Gastrocnemius medialis (tissue), 4 donors: ENCODE measurements at regions of chrX and their contacts with region 1.

Region 1: DNA sequence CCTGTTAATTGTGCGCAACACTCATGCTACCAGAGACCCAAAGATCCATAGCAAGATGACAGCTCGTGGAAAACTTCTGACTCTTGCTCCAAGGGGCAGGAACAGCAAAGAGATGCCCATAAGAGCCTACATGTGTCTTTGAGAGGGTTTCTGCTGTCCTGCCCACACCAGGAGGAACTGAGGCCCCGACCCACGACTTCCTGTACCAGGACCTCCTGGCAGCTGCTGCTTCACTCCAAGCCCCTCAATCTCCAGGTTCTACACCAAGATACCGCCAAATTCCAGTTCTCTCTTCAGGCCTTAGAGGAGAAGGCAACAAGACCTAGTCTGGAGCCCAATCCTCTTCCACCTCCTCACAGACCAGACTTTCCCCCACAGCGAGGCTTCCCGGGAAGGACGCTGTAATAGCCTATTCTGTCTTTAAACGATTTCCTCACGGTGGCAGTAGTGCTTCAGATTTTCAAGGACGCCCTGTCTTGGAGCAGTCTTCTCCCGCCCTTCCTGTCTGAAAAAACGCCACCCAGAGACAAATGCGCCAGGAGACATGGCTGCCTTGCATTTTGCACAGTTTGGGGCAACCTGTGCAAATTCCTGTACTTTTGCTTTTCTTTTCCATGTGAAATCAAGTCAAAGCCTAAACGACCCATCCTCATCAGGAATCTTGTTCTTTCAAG is 230.2 kb upstream of the STK26 start:
- DNase-seq: no peak
- ATAC-seq: no peak
- H3K4me3 ChIP-seq: peak overlapping the region in 3 of 4 donors; percentile 5 to 61 (median 55)
- H3K27ac ChIP-seq: peak overlapping the region in 2 of 4 donors; percentile 78 to 81
- H3K4me1 ChIP-seq: no peaks in the 10 kb centered on the region
- H3K27me3 ChIP-seq: no peaks in the 10 kb centered on the region
- CTCF ChIP-seq: peak in 3 of 5 experiments; percentile 43 to 71 (median 54)
- POLR2A ChIP-seq: no peak

Region 2: GRCh38 chrX:131741103-131741581 is 51.8 kb before region 1 on chrX:
- in situ Hi-C with region 1: no loop called
- intact Hi-C with region 1: loop called (anchors 1 kb)
- DNase-seq: no peak
- ATAC-seq: no peak
- H3K4me3 ChIP-seq: peak overlapping the region in 2 of 4 donors; percentile 58 to 62
- H3K27ac ChIP-seq: peak overlapping the region in 2 of 4 donors; percentile 73 to 81
- H3K4me1 ChIP-seq: no peaks in the 10 kb centered on the region
- H3K27me3 ChIP-seq: no peaks in the 10 kb centered on the region
- CTCF ChIP-seq: peak in 3 of 5 experiments; percentile 43 to 56 (median 46)
- POLR2A ChIP-seq: no peak

Region 3: GRCh38 chrX:131763674-131764073 is 29.3 kb before region 1 on chrX:
- in situ Hi-C with region 1: no loop called
- intact Hi-C with region 1: loop called (anchors 1 kb)
- DNase-seq: no peak
- ATAC-seq: no peak
- H3K4me3 ChIP-seq: peak overlapping the region in 2 of 4 donors; percentile 47 to 56
- H3K27ac ChIP-seq: peak overlapping the region in 2 of 4 donors; percentile 48 to 54
- H3K4me1 ChIP-seq: no peaks in the 10 kb centered on the region
- H3K27me3 ChIP-seq: no peaks in the 10 kb centered on the region
- CTCF ChIP-seq: peak in 3 of 5 experiments; percentile 27 to 63 (median 53)
- POLR2A ChIP-seq: no peak

Region 4: GRCh38 chrX:131821945-131822622 is 29.2 kb after region 1 on chrX:
- in situ Hi-C with region 1: no loop called
- intact Hi-C with region 1: loop called (anchors 2 kb)
- DNase-seq: no peak
- ATAC-seq: peak; percentile 36 to 42
- H3K4me3 ChIP-seq: peak overlapping the region in 2 of 4 donors; percentile 49 to 55
- H3K27ac ChIP-seq: peak overlapping the region; percentile 46 to 73 (median 60)
- H3K4me1 ChIP-seq: peaks cover 0 to 4% of the 10 kb centered on the region in 2 donors
- H3K27me3 ChIP-seq: no peaks in the 10 kb centered on the region
- CTCF ChIP-seq: peak in 3 of 5 experiments; percentile 51 to 77 (median 68)
- POLR2A ChIP-seq: no peak

Region 5: DNA sequence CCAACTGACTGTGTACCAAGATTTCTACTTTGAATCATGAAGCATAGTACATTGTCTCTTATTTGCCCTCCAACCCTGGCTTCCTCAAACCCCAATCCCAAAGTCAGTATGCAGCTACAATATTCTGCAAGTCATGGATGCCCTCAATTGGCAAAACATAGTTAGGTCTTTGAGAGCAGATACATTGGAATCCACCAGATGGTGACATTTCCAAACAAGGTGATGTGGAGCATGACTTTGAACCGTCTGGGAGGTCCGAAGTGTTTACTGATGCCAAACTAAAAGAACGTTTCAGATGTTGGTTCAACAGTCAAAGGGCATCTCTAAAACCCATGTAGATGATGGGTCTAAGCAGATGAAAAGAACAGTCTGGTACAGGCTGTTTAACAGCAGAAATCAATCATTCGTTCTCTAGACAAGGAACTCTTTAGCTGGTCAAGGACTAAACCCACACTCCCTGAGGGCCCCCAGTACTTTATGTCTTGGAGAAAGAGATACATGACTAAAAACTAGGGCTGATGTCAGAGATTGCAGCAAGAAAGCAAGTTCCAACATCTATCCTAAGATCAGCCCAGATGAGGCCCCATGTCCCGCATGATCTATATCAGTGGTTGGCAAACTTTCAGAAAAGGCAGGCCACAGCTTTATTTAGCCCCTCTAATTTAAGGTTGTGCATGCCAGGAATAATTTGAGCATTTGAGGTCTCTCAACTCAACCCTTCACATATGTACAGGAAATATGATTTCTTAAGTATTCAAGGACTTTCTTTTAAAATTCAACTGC is 378.7 kb after region 1 on chrX:
- in situ Hi-C with region 1: no loop called
- intact Hi-C with region 1: no loop called
- DNase-seq: no peak
- ATAC-seq: no peak
- H3K4me3 ChIP-seq: no peak overlapping the region
- H3K27ac ChIP-seq: no peak overlapping the region
- H3K4me1 ChIP-seq: no peaks in the 10 kb centered on the region
- H3K27me3 ChIP-seq: no peaks in the 10 kb centered on the region
- CTCF ChIP-seq: peak in 1 of 5 experiments; percentile 36
- POLR2A ChIP-seq: no peak